ENCODE measurements at regions of chr9 and their contacts with region 1.

Region 1: DNA sequence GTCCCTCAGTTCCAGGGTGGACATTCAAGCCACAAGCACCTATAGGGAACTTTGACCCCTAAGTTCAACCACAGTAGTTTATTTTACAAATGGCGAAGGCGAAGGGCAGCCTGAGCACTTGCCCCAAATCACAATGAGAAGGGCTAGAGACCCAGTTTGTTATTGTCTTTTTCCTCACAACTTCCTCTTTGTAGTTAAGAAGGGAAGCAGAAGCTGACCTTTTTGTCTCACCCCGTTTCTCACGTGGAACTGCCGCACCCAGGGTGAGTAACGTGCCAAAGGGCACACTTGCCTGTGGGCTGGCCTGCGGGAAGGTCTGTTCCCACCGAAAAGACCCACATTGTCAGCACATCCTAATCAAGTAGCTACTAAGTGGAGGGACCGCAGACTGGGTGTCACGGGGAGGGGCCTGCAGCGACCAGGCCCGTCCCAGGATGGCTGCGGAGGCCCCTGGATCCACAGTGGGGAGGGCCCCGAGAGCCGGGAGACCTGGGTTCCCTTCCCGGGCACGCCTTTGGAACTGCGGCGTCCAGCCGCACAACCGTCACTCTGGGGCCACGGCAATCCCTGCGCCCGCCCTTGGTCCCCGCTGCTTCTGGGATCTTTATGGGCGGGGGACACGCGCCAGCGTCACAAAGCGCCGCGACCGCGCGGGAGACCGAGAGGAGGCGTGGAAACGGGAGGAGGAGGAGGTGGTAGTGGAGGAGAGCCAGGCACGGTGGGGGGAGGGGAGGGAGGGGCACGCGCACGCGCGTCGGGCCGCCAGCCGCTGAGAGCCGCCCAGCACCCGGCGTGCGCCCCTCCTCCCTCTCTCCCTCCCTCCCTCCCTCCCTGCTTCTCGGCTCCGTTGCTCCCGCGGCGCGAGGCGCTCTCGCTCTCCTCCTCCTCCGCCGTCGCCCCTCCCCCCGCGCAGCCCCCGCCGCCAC is at the start of gene UBE2R2:
- DNase-seq: peak; percentile 94 to 97 (median 95)
- ATAC-seq: peak; percentile 85 to 92 (median 90)
- H3K4me3 ChIP-seq: peak within 1 kb of the TSS; percentile 80 to 98 (median 93)
- H3K27ac ChIP-seq: peak within 1 kb of the TSS; percentile 96 to 100 (median 99)
- H3K4me1 ChIP-seq: peaks cover 9 to 60% (median 46%) of the 10 kb centered on the region in 12 donors
- H3K27me3 ChIP-seq: no peaks in the 10 kb centered on the region
- CTCF ChIP-seq: no peak
- POLR2A ChIP-seq: peak in 1 of 2 donors; percentile 84
- total RNA-seq, gene UBE2R2: 29.4 to 45.7 (median 40.3) TPM

Region 2: DNA sequence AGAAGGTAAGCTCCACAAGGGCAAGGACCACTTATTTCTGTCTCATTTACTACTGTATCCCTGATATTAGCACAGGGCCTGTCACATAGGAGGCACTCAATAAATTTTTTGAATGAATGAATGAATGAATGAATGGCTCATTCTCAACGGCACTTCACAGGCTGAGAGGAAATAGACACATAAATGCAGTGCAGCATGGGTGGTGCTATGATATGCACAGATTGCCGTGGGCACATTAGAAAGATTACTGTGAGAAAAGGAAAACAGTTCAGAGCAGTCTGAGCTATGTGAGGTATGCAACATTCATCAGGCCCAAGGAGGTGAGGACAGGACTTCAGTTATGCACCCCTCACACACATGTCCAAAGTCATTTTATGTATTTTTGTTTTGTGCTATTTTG is 336.5 kb before region 1 on chr9:
- intact Hi-C with region 1: no loop called
- DNase-seq: no peak
- ATAC-seq: no peak
- H3K4me3 ChIP-seq: no peak overlapping the region
- H3K27ac ChIP-seq: no peak overlapping the region
- H3K4me1 ChIP-seq: no peaks in the 10 kb centered on the region
- H3K27me3 ChIP-seq: no peaks in the 10 kb centered on the region
- CTCF ChIP-seq: no peak
- POLR2A ChIP-seq: no peak

Region 3: DNA sequence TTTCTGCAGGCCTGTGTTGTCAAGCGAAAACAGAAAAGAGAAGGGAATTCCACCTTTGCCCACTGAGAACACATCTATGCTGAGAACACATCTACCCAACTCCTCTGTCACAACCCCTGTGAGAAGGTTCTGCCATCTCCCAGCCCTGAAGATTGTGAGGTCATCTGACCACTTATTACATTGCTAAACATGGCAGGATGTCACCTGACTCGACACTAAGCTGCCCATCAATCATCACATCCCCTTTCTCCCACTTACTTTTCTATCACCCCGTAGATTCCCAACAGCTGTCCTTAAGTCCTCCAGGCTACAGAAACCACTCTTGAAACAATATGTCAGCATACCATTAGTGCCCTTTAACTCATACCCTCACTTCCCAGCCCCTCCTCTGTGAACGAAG is 85.4 kb before region 1 on chr9:
- intact Hi-C with region 1: no loop called
- DNase-seq: no peak
- ATAC-seq: peak in 1 of 4 donors; percentile 18
- H3K4me3 ChIP-seq: no peak overlapping the region
- H3K27ac ChIP-seq: no peak overlapping the region
- H3K4me1 ChIP-seq: no peaks in the 10 kb centered on the region
- H3K27me3 ChIP-seq: no peaks in the 10 kb centered on the region
- CTCF ChIP-seq: no peak
- POLR2A ChIP-seq: no peak

Region 4: DNA sequence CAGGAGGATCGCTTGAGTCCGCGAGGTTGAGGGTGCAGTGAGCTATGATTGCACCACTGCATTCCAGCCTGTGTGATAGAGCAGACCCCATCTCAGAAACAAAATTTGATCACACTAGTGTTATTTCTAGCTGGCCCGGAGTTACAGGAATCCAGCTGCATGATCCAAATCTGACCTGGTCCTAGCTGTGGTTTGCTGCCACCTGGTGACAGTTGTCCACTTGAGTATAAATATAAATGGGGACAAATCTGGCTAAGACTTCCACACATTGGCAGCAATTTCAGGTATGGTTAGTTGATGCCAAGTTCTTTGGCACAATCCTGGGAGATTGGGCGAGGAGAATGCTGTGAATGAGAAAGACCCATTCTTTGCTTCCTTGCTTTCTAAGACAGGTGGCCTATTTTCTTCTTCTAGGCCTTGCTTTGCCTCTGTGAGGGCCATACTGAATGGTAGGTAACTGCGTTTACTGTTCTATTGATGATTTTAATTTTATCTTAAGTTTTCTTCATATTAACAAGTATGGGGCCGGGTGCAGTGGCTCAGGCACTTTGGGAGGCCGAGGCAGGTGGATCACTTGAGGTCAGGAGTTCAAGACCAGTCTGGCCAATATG is 35.7 kb after region 1 on chr9:
- intact Hi-C with region 1: loop called (anchors 1 to 5 kb)
- DNase-seq: peak in 4 of 5 donors; percentile 59 to 83 (median 69)
- ATAC-seq: peak; percentile 62 to 86 (median 82)
- H3K4me3 ChIP-seq: no peak overlapping the region
- H3K27ac ChIP-seq: peak overlapping the region in 8 of 12 donors; percentile 6 to 59 (median 34)
- H3K4me1 ChIP-seq: peaks cover 9 to 62% (median 41%) of the 10 kb centered on the region in 12 donors
- H3K27me3 ChIP-seq: no peaks in the 10 kb centered on the region
- CTCF ChIP-seq: peak; percentile 49 to 78 (median 68)
- POLR2A ChIP-seq: no peak

Region 5: GRCh38 chr9:33924978-33925797 is 108.6 kb after region 1 on chr9:
- intact Hi-C with region 1: loop called in 7 of 10 experiments (anchors 5 to 10 kb)
- DNase-seq: peak in 4 of 5 donors; percentile 43 to 56 (median 48)
- ATAC-seq: peak; percentile 30 to 71 (median 62)
- H3K4me3 ChIP-seq: no peak overlapping the region
- H3K27ac ChIP-seq: peak overlapping the region in 10 of 12 donors; percentile 8 to 50 (median 40)
- H3K4me1 ChIP-seq: peaks cover 0 to 42% (median 13%) of the 10 kb centered on the region in 12 donors
- H3K27me3 ChIP-seq: no peaks in the 10 kb centered on the region
- CTCF ChIP-seq: peak; percentile 40 to 74 (median 62)
- POLR2A ChIP-seq: no peak

Region 6: DNA sequence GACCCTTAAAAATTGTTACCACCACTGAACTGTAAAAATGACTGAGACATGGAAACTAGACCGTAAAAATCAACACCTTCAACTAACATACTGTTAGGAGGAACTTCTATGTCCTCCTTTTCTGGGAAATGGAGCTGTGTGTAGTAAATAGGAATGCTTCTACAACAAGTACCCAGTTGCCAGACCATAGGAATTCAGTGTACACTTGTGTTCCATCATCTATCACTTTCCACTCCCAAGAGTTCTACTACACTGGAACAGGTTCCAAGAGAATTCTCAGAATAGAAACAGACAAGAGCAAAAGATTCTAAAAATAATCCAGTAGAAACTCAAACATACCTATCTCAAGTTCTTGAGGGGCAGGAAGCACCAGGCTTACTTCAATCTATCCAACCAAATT is 208.5 kb after region 1 on chr9:
- intact Hi-C with region 1: loop called in 1 of 10 experiments (anchors 10 kb)
- DNase-seq: no peak
- ATAC-seq: peak; percentile 93 to 95 (median 95)
- H3K4me3 ChIP-seq: no peak overlapping the region
- H3K27ac ChIP-seq: peak overlapping the region in 11 of 12 donors; percentile 49 to 81 (median 72)
- H3K4me1 ChIP-seq: peaks cover 0 to 25% (median 4%) of the 10 kb centered on the region in 12 donors
- H3K27me3 ChIP-seq: no peaks in the 10 kb centered on the region
- CTCF ChIP-seq: no peak
- POLR2A ChIP-seq: no peak

Region 7: GRCh38 chr9:34048923-34049697 is 232.5 kb after region 1 on chr9:
- intact Hi-C with region 1: loop called in 3 of 10 experiments (anchors 5 to 10 kb)
- DNase-seq: peak; percentile 97 to 99 (median 99)
- ATAC-seq: peak; percentile 95 to 97 (median 96)
- H3K4me3 ChIP-seq: peak overlapping the region; percentile 71 to 100 (median 84)
- H3K27ac ChIP-seq: peak overlapping the region; percentile 77 to 99 (median 92)
- H3K4me1 ChIP-seq: peaks cover 3 to 32% (median 25%) of the 10 kb centered on the region in 12 donors
- H3K27me3 ChIP-seq: no peaks in the 10 kb centered on the region
- CTCF ChIP-seq: peak in 3 of 12 donors; percentile 20 to 28 (median 26)
- POLR2A ChIP-seq: no peak

Region 8: DNA sequence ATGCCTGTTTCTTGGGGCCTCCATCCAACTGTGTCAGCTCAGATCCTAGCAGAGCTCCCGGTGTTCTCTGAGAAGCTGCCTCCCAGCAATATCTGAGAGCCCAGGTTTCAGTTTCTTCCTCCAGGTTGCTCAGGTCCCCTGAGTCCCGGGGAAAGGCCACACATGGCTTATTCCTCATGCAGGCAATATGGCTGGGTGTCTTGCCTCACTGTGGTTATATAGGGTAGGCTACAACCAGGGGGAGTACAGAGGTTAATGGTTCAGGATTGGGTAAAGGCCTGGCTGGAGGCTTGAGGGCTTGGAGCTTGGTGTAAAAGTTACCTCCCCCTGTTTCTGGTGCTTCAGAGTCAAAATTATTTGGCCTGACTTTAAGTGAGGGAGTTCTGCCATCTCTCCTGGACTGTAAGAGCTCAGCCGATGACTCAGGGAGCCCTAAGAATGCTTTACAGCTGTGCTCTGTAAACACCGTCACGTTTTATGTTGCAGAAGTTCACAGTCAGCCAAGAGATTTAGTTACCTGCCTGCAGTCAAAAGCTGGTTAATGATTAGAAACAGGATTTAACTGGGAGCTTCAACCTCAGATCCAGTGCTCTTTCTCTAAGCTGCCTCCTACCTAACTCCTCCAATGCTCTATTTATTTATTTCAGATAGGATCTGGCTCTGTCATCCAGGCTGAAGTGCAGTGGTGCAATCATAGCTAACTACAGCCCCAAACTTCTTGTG is 256.4 kb after region 1 on chr9:
- intact Hi-C with region 1: loop called in 6 of 10 experiments (anchors 5 to 10 kb)
- DNase-seq: no peak
- ATAC-seq: peak in 3 of 4 donors; percentile 21 to 71 (median 63)
- H3K4me3 ChIP-seq: no peak overlapping the region
- H3K27ac ChIP-seq: peak overlapping the region in 1 of 12 donors; percentile 32
- H3K4me1 ChIP-seq: peaks cover 0 to 8% (median 0%) of the 10 kb centered on the region in 12 donors
- H3K27me3 ChIP-seq: no peaks in the 10 kb centered on the region
- CTCF ChIP-seq: no peak
- POLR2A ChIP-seq: no peak

Measured in heart left ventricle (tissue), 16 donors.